ENCODE measurements at regions of chr17 and their contacts with region 1.

Region 1: GRCh38 chr17:45172454-45173286 is 11.0 kb downstream of the HEXIM2 start:
- DNase-seq: peak; percentile 68
- ATAC-seq: peak; percentile 79
- H3K4me3 Mint-ChIP-seq: peak overlapping the region; percentile 65
- H3K27ac Mint-ChIP-seq: peak overlapping the region; percentile 96
- H3K4me1 Mint-ChIP-seq: peaks cover 23% of the 10 kb centered on the region
- H3K27me3 Mint-ChIP-seq: no peaks in the 10 kb centered on the region

Region 2: GRCh38 chr17:45161019-45161825 is 11.4 kb before region 1 on chr17:
- CTCF ChIA-PET with region 1: interaction called, 8 read pairs
- POLR2A ChIA-PET with region 1: interaction called, 36 read pairs
- DNase-seq: peak; percentile 99
- ATAC-seq: peak; percentile 98
- H3K4me3 Mint-ChIP-seq: peak overlapping the region; percentile 99
- H3K27ac Mint-ChIP-seq: peak overlapping the region; percentile 98
- H3K4me1 Mint-ChIP-seq: peaks cover 43% of the 10 kb centered on the region
- H3K27me3 Mint-ChIP-seq: no peaks in the 10 kb centered on the region